ENCODE measurements at regions of chr19 and their contacts with region 1.

Region 1: GRCh38 chr19:46404055-46404752 is 9.2 kb downstream of the CCDC8 start:
- DNase-seq: peak; percentile 35
- ATAC-seq: no peak
- H3K4me3 ChIP-seq: peak overlapping the region in 2 of 5 experiments; percentile 23 to 24
- H3K4me3 Mint-ChIP-seq: peak overlapping the region; percentile 55
- H3K27ac ChIP-seq: no peak overlapping the region
- H3K27ac Mint-ChIP-seq: no peak overlapping the region
- H3K4me1 ChIP-seq: peaks cover 16 to 18% of the 10 kb centered on the region in 2 donors
- H3K4me1 Mint-ChIP-seq: peaks cover 16% of the 10 kb centered on the region
- H3K27me3 ChIP-seq: peaks cover 0 to 77% (median 19%) of the 10 kb centered on the region in 4 experiments
- H3K27me3 Mint-ChIP-seq: peaks cover 62% of the 10 kb centered on the region
- CTCF ChIP-seq: no peak

Region 2: DNA sequence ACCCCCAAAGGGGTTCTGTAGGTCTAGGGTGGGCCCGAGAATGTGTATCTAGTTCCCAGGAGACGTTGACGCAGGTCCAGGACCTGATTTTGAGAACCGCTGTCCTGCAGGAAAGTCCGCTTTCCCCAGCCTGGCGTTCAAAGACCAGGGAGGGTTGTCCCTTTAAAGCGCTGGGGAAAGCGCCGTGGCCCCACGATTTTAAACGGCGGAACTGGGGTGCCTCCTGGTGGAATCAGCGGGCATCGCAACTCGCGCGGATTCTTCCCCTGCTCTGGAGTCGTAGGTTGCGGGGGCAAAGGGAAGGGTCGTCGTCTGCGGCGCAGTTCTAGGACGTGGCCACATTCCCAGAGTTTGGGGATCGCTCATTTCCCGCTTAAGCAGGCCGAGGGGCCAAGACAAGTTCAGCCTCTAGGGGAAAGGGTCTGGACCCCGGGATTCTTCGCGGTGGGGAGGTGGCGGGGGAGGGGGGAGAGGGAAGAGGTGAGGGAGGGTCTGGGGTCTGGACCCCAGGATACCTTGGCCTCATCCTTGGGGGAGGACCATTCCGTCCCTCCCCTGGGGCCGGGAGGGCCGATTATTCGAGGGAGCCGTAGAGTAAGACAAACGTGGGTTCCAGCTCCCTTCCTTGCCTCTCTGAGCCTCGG is 83.7 kb after region 1 on chr19:
- CTCF ChIA-PET with region 1: interaction called, 11 read pairs
- POLR2A ChIA-PET with region 1: no interaction called
- intact Hi-C with region 1: no loop called
- DNase-seq: peak; percentile 78
- ATAC-seq: peak; percentile 49
- H3K4me3 ChIP-seq: no peak overlapping the region
- H3K4me3 Mint-ChIP-seq: no peak overlapping the region
- H3K27ac ChIP-seq: no peak overlapping the region
- H3K27ac Mint-ChIP-seq: no peak overlapping the region
- H3K4me1 ChIP-seq: peaks cover 23 to 43% of the 10 kb centered on the region in 2 donors
- H3K4me1 Mint-ChIP-seq: peaks cover 22% of the 10 kb centered on the region
- H3K27me3 ChIP-seq: peaks cover 0 to 69% (median 44%) of the 10 kb centered on the region in 4 experiments
- H3K27me3 Mint-ChIP-seq: peaks cover 64% of the 10 kb centered on the region
- CTCF ChIP-seq: peak; percentile 83

Region 3: GRCh38 chr19:46513461-46514236 is 109.4 kb after region 1 on chr19:
- CTCF ChIA-PET with region 1: interaction called, 3 read pairs
- POLR2A ChIA-PET with region 1: no interaction called
- intact Hi-C with region 1: loop called (anchors 2 kb)
- DNase-seq: peak; percentile 68
- ATAC-seq: peak; percentile 63
- H3K4me3 ChIP-seq: no peak overlapping the region
- H3K4me3 Mint-ChIP-seq: no peak overlapping the region
- H3K27ac ChIP-seq: no peak overlapping the region
- H3K27ac Mint-ChIP-seq: no peak overlapping the region
- H3K4me1 ChIP-seq: no peaks in the 10 kb centered on the region
- H3K4me1 Mint-ChIP-seq: peaks cover 4% of the 10 kb centered on the region
- H3K27me3 ChIP-seq: peaks cover 0 to 30% (median 1%) of the 10 kb centered on the region in 4 experiments
- H3K27me3 Mint-ChIP-seq: peaks cover 37% of the 10 kb centered on the region
- CTCF ChIP-seq: peak; percentile 96

Region 4: GRCh38 chr19:46542428-46543230 is 138.4 kb after region 1 on chr19:
- CTCF ChIA-PET with region 1: no interaction called
- POLR2A ChIA-PET with region 1: interaction called, 16 read pairs
- intact Hi-C with region 1: no loop called
- DNase-seq: peak; percentile 82
- ATAC-seq: peak; percentile 39
- H3K4me3 ChIP-seq: no peak overlapping the region
- H3K4me3 Mint-ChIP-seq: no peak overlapping the region
- H3K27ac ChIP-seq: no peak overlapping the region
- H3K27ac Mint-ChIP-seq: no peak overlapping the region
- H3K4me1 ChIP-seq: peaks cover 0 to 4% of the 10 kb centered on the region in 2 donors
- H3K4me1 Mint-ChIP-seq: peaks cover 4% of the 10 kb centered on the region
- H3K27me3 ChIP-seq: peaks cover 0 to 4% (median 0%) of the 10 kb centered on the region in 4 experiments
- H3K27me3 Mint-ChIP-seq: peaks cover 3% of the 10 kb centered on the region
- CTCF ChIP-seq: peak; percentile 98

Measured in B cell (primary cell).